Activated T-helper 1 cell treated with anti-CD3 and anti-CD28 coated beads, Interleukin-12 subunit alpha, Interleukin-12 subunit beta, Interleukin-2, Interleukin-4 antibody, amounts not matched to agents 30 ng/mL and 10 ng/mL and 1 ng/mL, durations not matched to agents 14 hours and 24 hours and 36 hours (primary cell): ENCODE measurements at regions of chr6 and their contacts with region 1.

Region 1: GRCh38 chr6:33299237-33299944 is 649 bp upstream of the RGL2 start:
- DNase-seq: peak; percentile 92
- H3K4me3 Mint-ChIP-seq: peak overlapping the region; percentile 95
- H3K27ac Mint-ChIP-seq: peak overlapping the region; percentile 99
- H3K4me1 Mint-ChIP-seq: peaks cover 38% of the 10 kb centered on the region
- H3K27me3 Mint-ChIP-seq: no peaks in the 10 kb centered on the region

Region 2: DNA sequence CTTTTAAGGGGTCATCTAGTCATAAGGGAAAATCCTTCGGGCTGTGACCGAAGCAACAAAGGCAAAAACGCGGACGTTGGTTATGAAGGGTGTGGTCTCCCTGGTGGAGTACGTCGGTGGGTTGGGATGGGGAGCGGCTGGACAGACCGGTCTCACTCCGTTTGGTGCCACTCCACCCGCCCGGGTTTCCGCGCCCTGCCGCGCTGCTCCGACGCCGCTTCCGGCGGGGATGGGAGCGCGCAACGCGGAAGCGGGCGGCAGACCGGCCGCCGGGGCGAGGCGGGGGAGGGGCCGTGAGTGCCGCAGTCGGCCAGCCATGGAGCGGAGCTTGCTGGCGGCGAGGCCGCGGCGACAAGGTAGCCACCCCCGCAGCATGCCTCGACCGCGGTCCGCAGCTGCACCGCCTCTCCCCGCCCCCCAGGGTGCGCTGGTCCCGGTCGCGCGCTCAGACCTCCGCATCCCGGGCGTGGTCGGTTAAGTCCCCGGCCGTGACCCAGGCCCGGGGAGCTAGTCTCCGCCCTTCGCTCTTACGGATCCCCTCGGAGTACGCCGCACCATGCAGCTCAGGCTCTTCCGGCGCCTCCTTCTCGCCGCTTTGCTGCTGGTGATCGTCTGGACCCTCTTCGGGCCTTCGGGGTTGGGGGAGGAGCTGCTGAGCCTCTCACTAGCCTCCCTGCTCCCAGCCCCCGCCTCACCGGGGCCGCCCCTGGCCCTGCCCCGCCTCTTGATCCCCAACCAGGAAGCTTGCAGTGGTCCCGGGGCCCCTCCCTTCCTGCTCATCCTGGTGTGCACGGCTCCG is 22.3 kb before region 1 on chr6 and contains the start of gene B3GALT4:
- intact Hi-C with region 1: loop called (anchors 1 kb)
- DNase-seq: peak; percentile 75
- H3K4me3 Mint-ChIP-seq: peak within 1 kb of the TSS; percentile 97
- H3K27ac Mint-ChIP-seq: peak within 1 kb of the TSS; percentile 91
- H3K4me1 Mint-ChIP-seq: peaks cover 56% of the 10 kb centered on the region
- H3K27me3 Mint-ChIP-seq: no peaks in the 10 kb centered on the region
- total RNA-seq, gene B3GALT4: 4.4 and 5.6 TPM in 2 replicates

Region 3: GRCh38 chr6:33288921-33289748 is 10.3 kb before region 1 on chr6 and contains the starts of genes PFDN6 and WDR46:
- intact Hi-C with region 1: loop called (anchors 1 kb)
- DNase-seq: peak; percentile 83
- H3K4me3 Mint-ChIP-seq: peak within 1 kb of the TSS; percentile 98
- H3K27ac Mint-ChIP-seq: peak within 1 kb of the TSS; percentile 86
- H3K4me1 Mint-ChIP-seq: peaks cover 31% of the 10 kb centered on the region
- H3K27me3 Mint-ChIP-seq: no peaks in the 10 kb centered on the region
- total RNA-seq, gene PFDN6: 122 and 126 TPM in 2 replicates
- total RNA-seq, gene WDR46: 113 and 123 TPM in 2 replicates

Region 4: GRCh38 chr6:33312409-33313158 is 13.2 kb after region 1 on chr6:
- intact Hi-C with region 1: loop called (anchors 1 kb)
- DNase-seq: peak; percentile 76
- H3K4me3 Mint-ChIP-seq: peak overlapping the region; percentile 97
- H3K27ac Mint-ChIP-seq: peak overlapping the region; percentile 99
- H3K4me1 Mint-ChIP-seq: peaks cover 60% of the 10 kb centered on the region
- H3K27me3 Mint-ChIP-seq: no peaks in the 10 kb centered on the region

Region 5: GRCh38 chr6:33323623-33323948 is 24.2 kb after region 1 on chr6:
- intact Hi-C with region 1: loop called (anchors 1 kb)
- DNase-seq: no peak
- H3K4me3 Mint-ChIP-seq: peak overlapping the region; percentile 97
- H3K27ac Mint-ChIP-seq: peak overlapping the region; percentile 98
- H3K4me1 Mint-ChIP-seq: peaks cover 55% of the 10 kb centered on the region
- H3K27me3 Mint-ChIP-seq: no peaks in the 10 kb centered on the region